Activated CD8-positive, alpha-beta T cell treated with anti-CD3 and anti-CD28 coated beads, Interleukin-2, amount 10 ng/mL, durations not matched to agents 7 days and 5 days (primary cell): ENCODE measurements at regions of chr1 and their contacts with region 1.

Region 1: GRCh38 chr1:222643938-222644635 is 26.2 kb downstream of the MIA3 start:
- DNase-seq: peak; percentile 98
- ATAC-seq: peak; percentile 97
- H3K4me3 Mint-ChIP-seq: peak overlapping the region; percentile 97
- H3K27ac Mint-ChIP-seq: peak overlapping the region; percentile 95
- H3K4me1 Mint-ChIP-seq: peaks cover 25% of the 10 kb centered on the region
- H3K27me3 Mint-ChIP-seq: no peaks in the 10 kb centered on the region

Region 2: GRCh38 chr1:222561656-222562055 is 82.4 kb before region 1 on chr1:
- CTCF ChIA-PET with region 1: no interaction called
- POLR2A ChIA-PET with region 1: no interaction called
- DNase-seq: no peak
- ATAC-seq: no peak
- H3K4me3 Mint-ChIP-seq: no peak overlapping the region
- H3K27ac Mint-ChIP-seq: no peak overlapping the region
- H3K4me1 Mint-ChIP-seq: no peaks in the 10 kb centered on the region
- H3K27me3 Mint-ChIP-seq: no peaks in the 10 kb centered on the region

Region 3: DNA sequence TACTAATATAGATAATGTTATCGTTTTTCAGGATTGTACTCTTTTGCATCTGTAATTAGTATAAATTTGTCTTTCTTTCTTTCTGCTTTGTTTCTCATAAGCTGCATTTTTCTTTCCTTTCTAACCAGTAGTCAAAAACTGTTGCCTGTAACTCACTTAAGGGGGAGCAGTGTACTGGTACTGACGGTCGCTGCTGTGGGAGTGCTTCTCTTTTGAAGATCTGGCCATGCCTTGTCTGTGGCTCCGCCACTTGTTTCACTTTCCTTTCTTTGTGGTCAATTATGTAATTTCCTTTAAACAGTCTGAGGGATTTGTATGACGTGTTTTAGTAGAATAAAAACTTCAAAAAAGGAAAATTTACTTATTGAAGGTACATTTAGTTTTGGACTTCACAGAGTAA is 10.8 kb after region 1 on chr1:
- CTCF ChIA-PET with region 1: interaction called, 27 read pairs
- POLR2A ChIA-PET with region 1: interaction called, 68 read pairs
- DNase-seq: peak; percentile 88
- ATAC-seq: peak; percentile 91
- H3K4me3 Mint-ChIP-seq: peak overlapping the region; percentile 55
- H3K27ac Mint-ChIP-seq: peak overlapping the region; percentile 89
- H3K4me1 Mint-ChIP-seq: peaks cover 68% of the 10 kb centered on the region
- H3K27me3 Mint-ChIP-seq: no peaks in the 10 kb centered on the region

Region 4: GRCh38 chr1:222772996-222773379 is 128.9 kb after region 1 on chr1:
- CTCF ChIA-PET with region 1: no interaction called
- POLR2A ChIA-PET with region 1: no interaction called
- DNase-seq: peak; percentile 61
- ATAC-seq: peak; percentile 80
- H3K4me3 Mint-ChIP-seq: peak overlapping the region; percentile 40
- H3K27ac Mint-ChIP-seq: peak overlapping the region; percentile 51
- H3K4me1 Mint-ChIP-seq: peaks cover 19% of the 10 kb centered on the region
- H3K27me3 Mint-ChIP-seq: peaks cover 3% of the 10 kb centered on the region